ENCODE measurements at regions of chr13 and their contacts with region 1.

Region 1: GRCh38 chr13:48000778-48001628 is at the start of gene SUCLA2:
- DNase-seq: peak; percentile 89
- ATAC-seq: peak; percentile 97
- H3K4me3 ChIP-seq: peak within 1 kb of the TSS; percentile 97
- H3K27ac ChIP-seq: peak within 1 kb of the TSS; percentile 88
- H3K4me1 ChIP-seq: peaks cover 23% of the 10 kb centered on the region
- H3K27me3 ChIP-seq: no peaks in the 10 kb centered on the region
- CTCF ChIP-seq: no peak
- total RNA-seq, gene SUCLA2: 29.3 and 35.0 TPM in 2 replicates

Region 2: DNA sequence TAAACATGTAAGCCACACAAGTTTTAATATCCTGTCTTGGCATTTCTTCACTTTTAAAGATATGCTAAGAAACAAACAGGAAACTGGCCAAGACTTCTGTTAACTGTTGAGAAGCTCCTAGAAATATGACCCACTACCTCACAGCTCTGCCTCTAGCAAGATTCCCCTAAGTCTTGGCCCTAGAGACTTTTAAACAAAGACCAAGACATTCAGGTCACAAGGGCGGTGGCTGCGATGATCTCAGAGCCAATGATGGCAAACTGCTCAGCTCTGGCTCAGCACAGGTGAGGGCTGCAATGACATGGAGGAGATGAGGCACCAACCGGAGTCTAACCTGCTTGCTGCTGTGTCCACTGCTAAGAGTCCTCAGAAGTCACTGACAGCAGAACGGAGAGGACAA is 114.7 kb before region 1 on chr13:
- CTCF ChIA-PET with region 1: no interaction called
- POLR2A ChIA-PET with region 1: no interaction called
- intact Hi-C with region 1: no loop called
- DNase-seq: no peak
- ATAC-seq: no peak
- H3K4me3 ChIP-seq: no peak overlapping the region
- H3K27ac ChIP-seq: no peak overlapping the region
- H3K4me1 ChIP-seq: no peaks in the 10 kb centered on the region
- H3K27me3 ChIP-seq: no peaks in the 10 kb centered on the region
- CTCF ChIP-seq: no peak

Region 3: GRCh38 chr13:48078251-48078656 is 77.3 kb after region 1 on chr13:
- CTCF ChIA-PET with region 1: no interaction called
- POLR2A ChIA-PET with region 1: no interaction called
- intact Hi-C with region 1: no loop called
- DNase-seq: peak; percentile 8
- ATAC-seq: no peak
- H3K4me3 ChIP-seq: no peak overlapping the region
- H3K27ac ChIP-seq: no peak overlapping the region
- H3K4me1 ChIP-seq: no peaks in the 10 kb centered on the region
- H3K27me3 ChIP-seq: no peaks in the 10 kb centered on the region
- CTCF ChIP-seq: peak; percentile 43

Region 4: DNA sequence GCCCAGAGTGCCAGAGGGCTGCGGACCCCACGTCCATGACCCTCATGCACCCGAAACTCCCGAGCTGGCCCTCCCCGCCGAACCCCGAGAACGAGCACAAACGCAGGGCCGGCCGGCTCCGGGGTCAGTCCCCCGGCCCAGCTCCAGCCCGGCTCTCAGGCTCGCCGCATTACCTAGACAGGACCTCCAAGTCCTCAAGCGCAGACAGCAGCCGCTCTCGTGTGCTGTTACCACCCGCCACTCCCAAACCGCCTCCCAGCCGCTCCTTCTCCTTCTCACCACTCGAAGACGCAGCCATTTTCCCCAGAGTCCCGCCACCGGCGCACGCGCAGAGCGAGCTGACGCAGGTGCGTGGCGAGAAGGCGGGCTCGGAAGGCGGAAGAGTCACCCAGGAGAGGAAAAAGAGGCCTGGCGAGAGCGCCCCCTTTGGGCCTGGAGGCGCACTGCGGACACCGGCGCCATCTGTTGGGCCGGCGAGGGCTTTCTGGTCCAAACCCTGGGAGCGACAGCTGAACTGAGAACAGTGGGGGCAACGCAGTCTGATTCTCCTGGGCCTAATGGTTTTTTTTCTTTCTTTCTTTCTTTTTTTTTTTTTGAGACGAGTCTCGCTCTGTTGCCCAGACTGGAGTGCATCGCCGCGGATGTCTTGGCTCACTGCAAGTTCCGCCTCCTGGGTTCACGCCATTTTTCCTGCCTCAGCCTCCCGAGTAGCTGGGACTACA is 93.9 kb after region 1 on chr13 and contains the start of gene MED4:
- CTCF ChIA-PET with region 1: no interaction called
- POLR2A ChIA-PET with region 1: no interaction called
- intact Hi-C with region 1: loop called (anchors 5 kb)
- DNase-seq: peak; percentile 91
- ATAC-seq: peak; percentile 94
- H3K4me3 ChIP-seq: peak within 1 kb of the TSS; percentile 99
- H3K27ac ChIP-seq: peak within 1 kb of the TSS; percentile 29; the same call in 1 of the 2 replicates
- H3K4me1 ChIP-seq: peaks cover 8% of the 10 kb centered on the region
- H3K27me3 ChIP-seq: no peaks in the 10 kb centered on the region
- CTCF ChIP-seq: peak; percentile 90
- total RNA-seq, gene MED4: 11.6 and 19.0 TPM in 2 replicates

Measured in PC-3 (cell line).